Activated naive CD4-positive, alpha-beta T cell treated with anti-CD3 and anti-CD28 coated beads for 36 hours (primary cell): ENCODE measurements at regions of chr16 and their contacts with region 1.

Region 1: GRCh38 chr16:74709441-74709877 is 8.8 kb upstream of the MLKL start:
- DNase-seq: peak; percentile 91
- H3K4me3 Mint-ChIP-seq: no peak overlapping the region
- H3K27ac Mint-ChIP-seq: no peak overlapping the region
- H3K4me1 Mint-ChIP-seq: peaks cover 5% of the 10 kb centered on the region
- H3K27me3 Mint-ChIP-seq: no peaks in the 10 kb centered on the region

Region 2: GRCh38 chr16:74813109-74813641 is 103.7 kb after region 1 on chr16:
- CTCF ChIA-PET with region 1: interaction called, 5 read pairs
- intact Hi-C with region 1: loop called (anchors 1 kb)
- DNase-seq: peak; percentile 84
- H3K4me3 Mint-ChIP-seq: no peak overlapping the region
- H3K27ac Mint-ChIP-seq: no peak overlapping the region
- H3K4me1 Mint-ChIP-seq: peaks cover 3% of the 10 kb centered on the region
- H3K27me3 Mint-ChIP-seq: no peaks in the 10 kb centered on the region

Region 3: GRCh38 chr16:74998481-74999218 is 289.2 kb after region 1 on chr16 and contains the start of gene ZNRF1:
- CTCF ChIA-PET with region 1: interaction called, 5 read pairs
- intact Hi-C with region 1: loop called (anchors 5 kb)
- DNase-seq: peak; percentile 92
- H3K4me3 Mint-ChIP-seq: peak within 1 kb of the TSS; percentile 79
- H3K27ac Mint-ChIP-seq: peak within 1 kb of the TSS; percentile 83
- H3K4me1 Mint-ChIP-seq: peaks cover 25% of the 10 kb centered on the region
- H3K27me3 Mint-ChIP-seq: peaks cover 12% of the 10 kb centered on the region
- total RNA-seq, gene ZNRF1: 35.3 to 35.7 TPM

Region 4: DNA sequence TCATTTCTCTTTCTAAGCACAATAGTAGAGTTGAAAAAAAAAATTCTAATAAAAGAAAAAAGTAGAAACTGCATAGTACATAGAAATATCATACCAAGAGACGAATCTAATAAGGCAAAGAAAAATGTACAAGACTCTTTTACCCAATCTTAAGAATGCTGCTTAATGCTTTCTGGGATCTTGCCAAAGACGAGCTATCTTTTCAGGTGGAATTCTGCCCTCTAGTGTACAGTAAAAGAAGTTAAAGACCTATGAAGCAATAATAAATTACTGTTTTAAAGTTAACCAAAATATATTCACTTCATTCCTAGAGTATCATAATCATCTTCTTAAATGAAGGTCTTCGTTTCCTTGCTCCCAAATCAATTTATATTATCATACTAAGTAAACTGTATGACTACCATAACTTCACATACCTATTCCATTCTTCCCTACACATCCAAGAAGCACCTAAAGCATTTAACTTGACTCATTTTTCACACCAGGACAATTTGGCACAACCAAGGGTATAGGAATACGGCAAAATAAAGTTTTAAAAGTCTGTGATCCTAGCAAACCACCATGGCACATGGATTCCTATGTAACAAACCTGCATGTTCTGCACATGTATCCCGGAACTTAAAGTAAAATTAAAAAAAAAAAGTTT is 676.2 kb after region 1 on chr16:
- CTCF ChIA-PET with region 1: interaction called, 3 read pairs
- intact Hi-C with region 1: loop called (anchors 5 kb)
- DNase-seq: no peak
- H3K4me3 Mint-ChIP-seq: no peak overlapping the region
- H3K27ac Mint-ChIP-seq: no peak overlapping the region
- H3K4me1 Mint-ChIP-seq: peaks cover 19% of the 10 kb centered on the region
- H3K27me3 Mint-ChIP-seq: peaks cover 2% of the 10 kb centered on the region